MCF 10A (cell line): ENCODE measurements at regions of chr11 and their contacts with region 1.

Region 1: DNA sequence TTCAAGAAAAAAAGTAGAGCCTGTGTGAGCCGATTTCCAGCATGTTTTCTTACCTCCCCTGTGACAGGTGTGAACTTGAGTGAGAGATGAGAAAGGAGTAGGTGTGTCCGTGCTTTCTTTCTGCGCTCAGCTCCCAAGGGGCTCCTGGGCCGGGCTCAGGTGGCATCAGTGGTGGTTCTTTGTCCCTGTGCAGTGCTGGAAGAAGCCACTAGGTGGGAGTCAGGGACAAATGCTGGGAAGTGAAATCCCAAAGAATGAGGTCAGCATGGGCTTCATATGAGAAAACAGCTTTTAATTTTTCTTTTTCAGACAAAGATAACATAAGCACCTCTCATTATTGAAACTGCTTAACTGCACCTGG is 57.8 kb downstream of the PPFIBP2 start:
- DNase-seq: peak; percentile 83
- H3K4me3 Mint-ChIP-seq: no peak overlapping the region
- H3K27ac Mint-ChIP-seq: no peak overlapping the region
- H3K4me1 Mint-ChIP-seq: peaks cover 16% of the 10 kb centered on the region
- H3K27me3 Mint-ChIP-seq: no peaks in the 10 kb centered on the region
- CTCF ChIP-seq: peak; percentile 91

Region 2: GRCh38 chr11:7239877-7240276 is 331.7 kb before region 1 on chr11:
- CTCF ChIA-PET with region 1: no interaction called
- POLR2A ChIA-PET with region 1: no interaction called
- intact Hi-C with region 1: no loop called
- DNase-seq: no peak
- H3K4me3 Mint-ChIP-seq: no peak overlapping the region
- H3K27ac Mint-ChIP-seq: no peak overlapping the region
- H3K4me1 Mint-ChIP-seq: no peaks in the 10 kb centered on the region
- H3K27me3 Mint-ChIP-seq: peaks cover 49% of the 10 kb centered on the region
- CTCF ChIP-seq: no peak

Region 3: DNA sequence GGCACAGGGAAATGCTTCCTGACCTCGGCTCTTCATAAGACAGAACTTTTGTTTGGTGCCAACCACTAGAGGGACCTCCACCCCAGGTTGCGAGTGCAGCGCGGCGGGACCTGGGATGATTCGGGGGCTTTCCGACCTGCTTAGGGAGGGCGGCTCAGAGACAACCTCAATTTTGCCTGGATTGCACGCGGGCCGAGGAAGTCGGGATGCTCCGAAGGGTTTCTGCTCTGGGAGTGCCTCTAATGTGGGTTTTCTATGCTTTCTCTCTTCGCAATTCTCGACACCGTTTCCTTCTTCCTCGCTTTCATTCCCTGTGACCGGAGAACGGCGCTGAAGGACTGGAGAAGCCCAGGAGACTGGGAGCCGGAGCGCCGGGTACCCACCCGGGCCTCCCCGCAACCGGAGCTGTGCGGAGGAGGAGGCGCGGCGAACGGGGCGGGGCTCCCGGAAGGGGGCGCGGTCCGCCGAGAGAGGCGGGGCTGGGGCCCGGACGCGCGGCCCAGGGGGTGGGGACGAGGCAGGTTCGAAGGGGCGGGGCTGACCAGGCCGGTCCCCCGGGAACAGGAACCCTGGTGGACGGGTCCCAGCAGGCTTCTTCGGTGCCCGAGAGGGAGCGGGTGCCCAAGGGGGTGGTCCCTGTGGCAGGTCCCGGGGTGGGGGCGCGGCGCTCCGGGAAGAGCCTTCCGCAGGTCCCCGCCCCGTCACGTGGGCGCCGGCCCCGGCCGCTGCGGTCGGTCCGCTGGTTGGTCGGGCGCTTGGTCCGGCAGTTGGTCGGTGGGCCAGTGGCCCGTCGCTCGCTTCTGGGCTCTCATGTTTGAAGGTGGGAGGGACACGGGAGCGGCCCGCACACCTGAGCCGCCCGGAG is 58.2 kb before region 1 on chr11 and contains the start of gene PPFIBP2:
- CTCF ChIA-PET with region 1: interaction called, 38 read pairs
- POLR2A ChIA-PET with region 1: no interaction called
- intact Hi-C with region 1: loop called (anchors 1 kb)
- DNase-seq: peak; percentile 70
- H3K4me3 Mint-ChIP-seq: peak within 1 kb of the TSS; percentile 83
- H3K27ac Mint-ChIP-seq: peak within 1 kb of the TSS; percentile 52
- H3K4me1 Mint-ChIP-seq: no peaks in the 10 kb centered on the region
- H3K27me3 Mint-ChIP-seq: peaks cover 17% of the 10 kb centered on the region
- CTCF ChIP-seq: peak; percentile 74
- total RNA-seq, gene PPFIBP2: 3.5 and 4.3 TPM in 2 replicates

Region 4: DNA sequence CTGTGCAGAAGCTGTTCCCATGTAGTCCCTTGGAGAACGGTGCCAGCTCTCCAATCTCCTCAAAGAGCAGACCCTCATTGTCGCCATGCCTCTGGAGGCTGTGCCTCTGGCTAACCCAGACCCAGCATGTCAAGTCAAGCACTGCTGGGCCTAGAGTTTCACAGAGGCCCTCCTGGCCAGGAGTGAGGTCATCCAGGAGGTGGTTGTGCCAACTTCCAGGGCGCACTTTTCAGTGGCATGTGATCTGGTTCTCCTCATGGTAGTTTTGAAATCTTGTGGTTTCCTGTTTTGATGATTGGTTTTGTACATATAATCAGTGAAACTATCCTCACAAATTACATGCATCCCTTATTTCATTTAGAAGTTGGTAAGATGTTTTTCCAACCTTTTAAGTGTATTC is 21.1 kb after region 1 on chr11:
- CTCF ChIA-PET with region 1: interaction called, 24 read pairs
- POLR2A ChIA-PET with region 1: interaction called, 5 read pairs
- intact Hi-C with region 1: no loop called
- DNase-seq: peak; percentile 95
- H3K4me3 Mint-ChIP-seq: no peak overlapping the region
- H3K27ac Mint-ChIP-seq: peak overlapping the region; percentile 79
- H3K4me1 Mint-ChIP-seq: peaks cover 38% of the 10 kb centered on the region
- H3K27me3 Mint-ChIP-seq: no peaks in the 10 kb centered on the region
- CTCF ChIP-seq: no peak

Region 5: GRCh38 chr11:7622721-7623120 is 51.1 kb after region 1 on chr11:
- CTCF ChIA-PET with region 1: interaction called, 17 read pairs
- POLR2A ChIA-PET with region 1: no interaction called
- intact Hi-C with region 1: no loop called
- DNase-seq: no peak
- H3K4me3 Mint-ChIP-seq: no peak overlapping the region
- H3K27ac Mint-ChIP-seq: no peak overlapping the region
- H3K4me1 Mint-ChIP-seq: no peaks in the 10 kb centered on the region
- H3K27me3 Mint-ChIP-seq: no peaks in the 10 kb centered on the region
- CTCF ChIP-seq: no peak

Region 6: DNA sequence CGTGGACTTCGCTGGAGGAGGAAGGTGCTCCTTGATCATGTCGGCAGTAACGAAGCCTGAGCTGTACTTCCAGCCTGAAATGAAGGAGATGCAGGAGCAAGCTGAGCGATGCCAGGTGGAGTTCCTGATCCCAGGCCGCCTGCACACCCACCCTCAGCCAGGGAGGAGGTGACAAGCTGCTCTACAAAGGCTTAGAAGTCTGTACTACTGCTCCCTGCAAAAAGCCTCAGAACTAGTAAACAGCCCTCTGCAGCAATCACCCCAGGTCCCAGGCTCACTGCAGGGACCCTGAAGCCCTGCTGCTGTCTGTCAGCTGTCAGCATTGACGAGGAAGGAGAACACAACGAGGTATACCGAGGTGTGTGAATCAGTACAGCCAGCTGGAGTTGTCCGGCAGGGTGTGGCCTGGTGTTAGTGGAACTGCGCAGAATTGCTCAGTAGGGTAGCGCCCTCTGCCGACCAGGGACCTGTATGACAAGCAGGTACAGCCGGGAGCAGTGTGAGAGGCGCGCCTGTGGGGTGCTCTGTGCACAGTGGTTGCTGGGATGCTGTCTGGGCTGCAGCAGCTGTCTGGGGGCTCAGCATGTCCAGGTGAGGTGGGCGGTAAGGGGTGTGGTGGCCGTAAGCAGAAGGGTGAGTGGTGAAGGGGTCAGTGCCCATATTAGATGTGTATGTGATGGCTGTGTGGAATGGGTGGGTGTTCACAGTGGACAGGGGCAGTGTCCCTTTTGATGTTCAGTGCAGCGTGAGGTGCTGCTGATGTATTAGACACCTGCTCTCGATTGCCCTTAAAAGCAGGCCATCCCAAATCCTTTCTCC is 94.1 kb after region 1 on chr11:
- CTCF ChIA-PET with region 1: interaction called, 182 read pairs
- POLR2A ChIA-PET with region 1: no interaction called
- intact Hi-C with region 1: loop called (anchors 2 kb)
- DNase-seq: peak; percentile 81
- H3K4me3 Mint-ChIP-seq: no peak overlapping the region
- H3K27ac Mint-ChIP-seq: no peak overlapping the region
- H3K4me1 Mint-ChIP-seq: no peaks in the 10 kb centered on the region
- H3K27me3 Mint-ChIP-seq: no peaks in the 10 kb centered on the region
- CTCF ChIP-seq: peak; percentile 97

Region 7: GRCh38 chr11:7986768-7987559 is 415.3 kb after region 1 on chr11 and contains the start of gene EIF3F:
- CTCF ChIA-PET with region 1: interaction called, 3 read pairs
- POLR2A ChIA-PET with region 1: no interaction called
- intact Hi-C with region 1: loop called (anchors 5 kb)
- DNase-seq: peak; percentile 99
- H3K4me3 Mint-ChIP-seq: peak within 1 kb of the TSS; percentile 92
- H3K27ac Mint-ChIP-seq: peak within 1 kb of the TSS; percentile 82
- H3K4me1 Mint-ChIP-seq: peaks cover 24% of the 10 kb centered on the region
- H3K27me3 Mint-ChIP-seq: no peaks in the 10 kb centered on the region
- CTCF ChIP-seq: peak; percentile 91
- total RNA-seq, gene EIF3F: 255 and 309 TPM in 2 replicates